Prostate gland (tissue), 2 donors: ENCODE measurements at regions of chr16 and their contacts with region 1.

Region 1: GRCh38 chr16:75110637-75111513 is 5.7 kb downstream of the LDHD start:
- DNase-seq: peak; percentile 85
- H3K4me3 ChIP-seq: no peak overlapping the region
- H3K27ac ChIP-seq: peak overlapping the region; percentile 52 to 65
- H3K4me1 ChIP-seq: no peaks in the 10 kb centered on the region
- H3K27me3 ChIP-seq: no peaks in the 10 kb centered on the region
- CTCF ChIP-seq: peak; percentile 79 to 96 (median 89)
- POLR2A ChIP-seq: no peak

Region 2: DNA sequence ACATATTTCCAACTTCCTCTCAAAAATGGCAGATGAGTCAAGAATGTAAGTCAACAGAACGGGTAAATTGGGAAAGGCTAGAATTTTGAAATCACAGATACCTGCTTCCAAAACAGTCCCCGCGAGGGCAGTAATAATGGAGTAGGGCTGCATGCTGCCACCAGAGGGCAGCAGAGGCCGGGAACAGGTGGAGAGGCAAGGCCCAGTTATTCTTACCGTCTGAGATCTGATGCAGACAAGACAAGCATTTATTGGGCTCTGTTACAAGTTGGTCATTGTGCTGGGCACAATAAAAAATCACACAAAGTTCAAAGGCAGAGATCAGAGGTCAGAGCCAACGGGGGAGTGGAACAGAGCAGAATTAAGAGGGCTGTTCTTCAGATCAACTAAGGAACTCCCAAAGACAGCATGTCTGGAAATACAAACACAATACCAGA is 401.4 kb before region 1 on chr16:
- intact Hi-C with region 1: loop called (anchors 10 kb)
- DNase-seq: peak; percentile 73
- H3K4me3 ChIP-seq: no peak overlapping the region
- H3K27ac ChIP-seq: no peak overlapping the region
- H3K4me1 ChIP-seq: no peaks in the 10 kb centered on the region
- H3K27me3 ChIP-seq: no peaks in the 10 kb centered on the region
- CTCF ChIP-seq: peak; percentile 81 to 98 (median 96)
- POLR2A ChIP-seq: no peak

Region 3: DNA sequence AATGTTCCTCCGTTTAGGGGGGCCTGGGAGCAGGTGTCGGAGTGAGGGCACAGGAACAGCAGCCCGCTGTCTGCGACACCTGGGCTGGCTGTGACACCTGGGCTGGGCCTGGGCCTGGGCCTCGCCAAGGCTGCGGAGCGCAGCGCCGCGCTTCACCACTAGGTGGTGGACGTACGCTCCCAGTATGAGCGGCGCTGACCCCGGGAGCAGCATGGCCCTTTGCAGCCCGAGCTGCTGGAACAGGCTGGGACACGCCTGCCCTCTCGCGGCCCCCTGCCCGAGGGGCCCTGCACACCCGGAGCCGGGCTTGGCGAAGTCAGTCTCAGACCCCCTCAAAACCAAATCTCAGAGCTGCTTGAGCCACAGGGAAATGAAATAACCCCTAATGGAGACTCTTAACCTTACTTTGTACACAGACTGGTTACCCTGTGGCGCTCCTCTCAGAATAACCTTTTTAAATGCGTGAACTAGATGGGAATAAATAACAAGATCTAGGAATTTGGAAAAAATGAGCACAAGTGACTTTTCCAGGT is 297.7 kb before region 1 on chr16:
- intact Hi-C with region 1: loop called (anchors 10 kb)
- DNase-seq: peak; percentile 68
- H3K4me3 ChIP-seq: no peak overlapping the region
- H3K27ac ChIP-seq: no peak overlapping the region
- H3K4me1 ChIP-seq: no peaks in the 10 kb centered on the region
- H3K27me3 ChIP-seq: no peaks in the 10 kb centered on the region
- CTCF ChIP-seq: peak; percentile 66 to 95 (median 84)
- POLR2A ChIP-seq: no peak

Region 4: DNA sequence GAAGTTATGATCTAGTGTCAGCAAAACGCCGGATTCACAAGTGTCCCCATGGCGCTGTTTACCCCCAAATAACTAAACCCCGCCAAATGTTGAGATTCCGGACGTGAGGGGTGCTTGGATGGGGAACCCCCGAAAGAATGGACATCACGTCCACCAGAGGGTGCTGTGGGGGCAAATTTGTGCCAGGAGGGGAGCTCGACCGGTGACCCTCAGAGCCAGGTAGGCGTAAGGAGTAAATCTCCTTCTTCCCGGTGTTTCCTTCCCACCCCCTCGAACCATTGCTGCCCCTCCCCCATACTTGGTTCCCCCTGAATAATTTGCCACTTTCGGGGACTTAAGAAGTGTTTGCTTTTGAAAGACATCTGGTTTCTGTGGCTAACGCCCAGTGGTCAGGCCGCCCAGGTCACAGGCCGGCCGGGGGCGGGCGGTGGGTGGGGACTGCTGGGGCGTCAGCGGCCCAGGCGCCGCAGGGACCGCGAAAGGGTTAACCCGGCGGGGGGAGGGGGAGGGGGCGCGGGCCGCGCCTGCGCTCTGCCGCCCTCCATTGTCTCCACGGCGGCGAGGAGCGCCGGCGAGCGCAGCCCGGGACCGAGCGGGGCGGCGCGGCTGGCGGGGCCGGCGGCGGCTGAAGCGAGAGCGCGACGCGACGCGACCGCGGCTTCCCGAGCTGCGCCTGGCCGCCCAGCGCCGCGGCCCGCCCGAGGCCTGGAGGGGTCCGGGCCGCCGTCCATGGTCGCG is 112.2 kb before region 1 on chr16 and contains the start of gene ZNRF1:
- intact Hi-C with region 1: loop called (anchors 1 kb)
- DNase-seq: peak; percentile 67
- H3K4me3 ChIP-seq: peak within 1 kb of the TSS; percentile 52 to 71
- H3K27ac ChIP-seq: peak within 1 kb of the TSS; percentile 75 to 82
- H3K4me1 ChIP-seq: peaks cover 2% of the 10 kb centered on the region
- H3K27me3 ChIP-seq: no peaks in the 10 kb centered on the region
- CTCF ChIP-seq: peak; percentile 78 to 87 (median 84)
- POLR2A ChIP-seq: no peak
- total RNA-seq, gene ZNRF1: 15.6 to 64.2 TPM

Region 5: DNA sequence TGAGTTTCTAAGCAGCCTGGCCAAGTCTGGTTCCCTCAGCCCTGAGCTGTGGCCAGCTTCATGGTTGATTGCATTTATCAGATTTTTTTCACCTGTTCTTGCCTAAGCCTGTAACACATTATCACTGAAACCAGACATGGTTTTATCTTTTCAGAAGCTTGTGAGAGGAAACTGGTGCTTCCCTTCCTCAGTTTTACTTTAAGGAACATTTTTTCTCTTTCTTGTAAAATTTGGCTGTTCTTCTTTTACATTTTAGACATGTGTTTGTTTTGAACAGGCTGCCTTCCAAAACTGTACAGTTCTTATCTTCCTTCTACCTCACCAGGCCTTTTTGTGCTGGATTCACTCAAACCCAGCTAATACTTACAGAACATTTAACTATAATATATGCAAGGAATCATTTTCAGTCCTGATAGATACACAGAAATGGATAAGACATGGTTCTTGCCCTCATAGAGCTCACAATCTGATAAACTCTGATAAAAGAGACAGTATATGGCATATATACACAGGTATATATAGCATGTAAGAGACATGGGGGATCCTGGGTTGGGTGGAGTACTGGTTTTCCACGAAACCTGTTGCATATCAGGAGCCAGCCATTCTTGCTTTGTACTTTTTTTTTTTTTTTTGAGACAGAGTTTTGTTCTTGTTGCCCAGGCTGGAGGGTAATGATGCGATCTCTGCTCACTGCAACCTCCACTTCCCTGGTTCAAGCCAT is 67.5 kb before region 1 on chr16:
- intact Hi-C with region 1: loop called (anchors 10 kb)
- DNase-seq: no peak
- H3K4me3 ChIP-seq: no peak overlapping the region
- H3K27ac ChIP-seq: peak overlapping the region; percentile 5 to 27
- H3K4me1 ChIP-seq: no peaks in the 10 kb centered on the region
- H3K27me3 ChIP-seq: no peaks in the 10 kb centered on the region
- CTCF ChIP-seq: no peak
- POLR2A ChIP-seq: no peak

Region 6: GRCh38 chr16:75206749-75207451 is 96.0 kb after region 1 on chr16 and contains the start of gene CTRB2:
- intact Hi-C with region 1: no loop called
- DNase-seq: no peak
- H3K4me3 ChIP-seq: no peak within 1 kb of the TSS
- H3K27ac ChIP-seq: no peak within 1 kb of the TSS
- H3K4me1 ChIP-seq: no peaks in the 10 kb centered on the region
- H3K27me3 ChIP-seq: no peaks in the 10 kb centered on the region
- CTCF ChIP-seq: no peak
- POLR2A ChIP-seq: no peak
- total RNA-seq, gene CTRB2: not detected